ENCODE measurements at regions of chr7 and their contacts with region 1.

Region 1: GRCh38 chr7:3092468-3092867 is 48.8 kb upstream of the CARD11 start:
- DNase-seq: peak; percentile 92
- ATAC-seq: peak; percentile 84
- H3K4me3 Mint-ChIP-seq: peak overlapping the region; percentile 51
- H3K27ac Mint-ChIP-seq: peak overlapping the region; percentile 96
- H3K4me1 Mint-ChIP-seq: peaks cover 64% of the 10 kb centered on the region
- H3K27me3 Mint-ChIP-seq: no peaks in the 10 kb centered on the region
- CTCF ChIP-seq: no peak

Region 2: DNA sequence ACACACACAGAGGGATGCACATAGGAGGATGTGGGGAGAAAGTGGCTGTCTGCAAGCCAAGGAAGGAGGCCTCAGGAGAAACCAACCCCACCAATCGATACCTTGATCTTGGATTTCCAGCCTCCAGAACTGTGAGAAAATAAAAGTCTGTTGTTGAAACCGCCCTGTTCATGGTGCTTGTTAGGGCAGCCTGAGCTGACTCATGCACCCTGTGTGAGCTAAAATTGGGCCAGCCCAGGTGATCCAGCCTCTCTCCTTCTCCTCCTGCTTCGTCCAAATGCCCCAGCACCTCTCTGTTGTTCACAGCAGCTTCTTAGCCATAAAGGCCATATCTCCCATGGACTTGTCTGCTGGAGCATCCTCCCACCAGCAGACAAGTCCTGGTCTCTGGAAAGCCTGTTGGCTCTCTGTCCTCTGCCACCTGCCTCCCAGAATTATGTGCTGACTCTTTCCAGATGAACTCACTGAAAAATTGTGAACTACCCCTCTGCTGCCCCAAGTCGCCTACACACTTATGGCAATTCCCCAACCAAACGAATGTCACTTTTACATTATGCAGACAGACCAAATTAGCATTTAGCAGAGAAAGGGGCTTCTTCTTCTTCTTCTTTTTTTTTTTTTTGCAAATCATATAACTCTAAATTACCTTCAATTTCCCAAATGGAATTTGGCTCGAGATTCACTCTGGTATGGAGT is 18.6 kb before region 1 on chr7:
- CTCF ChIA-PET with region 1: interaction called, 101 read pairs
- POLR2A ChIA-PET with region 1: interaction called, 15 read pairs
- intact Hi-C with region 1: no loop called
- DNase-seq: no peak
- ATAC-seq: peak; percentile 49
- H3K4me3 Mint-ChIP-seq: no peak overlapping the region
- H3K27ac Mint-ChIP-seq: no peak overlapping the region
- H3K4me1 Mint-ChIP-seq: peaks cover 24% of the 10 kb centered on the region
- H3K27me3 Mint-ChIP-seq: no peaks in the 10 kb centered on the region
- CTCF ChIP-seq: no peak

Region 3: DNA sequence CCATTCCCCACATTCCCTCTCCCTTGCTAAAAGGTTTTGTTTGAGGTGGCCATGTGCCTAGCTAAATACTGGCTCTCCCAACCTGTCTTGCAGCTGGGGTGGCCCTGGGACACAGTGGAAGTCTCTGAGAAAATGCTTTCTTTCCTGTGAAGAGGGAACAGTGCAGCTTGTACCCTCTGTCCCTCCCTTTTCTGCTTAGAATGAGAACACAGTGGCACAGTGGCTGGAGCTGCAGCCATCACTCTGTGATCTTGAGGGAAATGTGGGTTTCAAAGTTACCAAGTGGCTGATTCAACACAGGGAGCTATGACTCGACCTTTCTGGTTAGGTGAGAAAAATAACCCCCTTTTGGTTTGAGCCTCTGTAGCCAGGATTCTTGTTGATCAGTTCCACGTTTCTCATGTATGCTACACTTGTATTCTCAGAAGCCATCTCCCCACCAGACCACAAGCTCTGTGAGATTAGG is 13.9 kb after region 1 on chr7:
- CTCF ChIA-PET with region 1: interaction called, 20 read pairs
- POLR2A ChIA-PET with region 1: interaction called, 8 read pairs
- intact Hi-C with region 1: no loop called
- DNase-seq: peak; percentile 78
- ATAC-seq: peak; percentile 84
- H3K4me3 Mint-ChIP-seq: peak overlapping the region; percentile 1
- H3K27ac Mint-ChIP-seq: peak overlapping the region; percentile 94
- H3K4me1 Mint-ChIP-seq: peaks cover 78% of the 10 kb centered on the region
- H3K27me3 Mint-ChIP-seq: no peaks in the 10 kb centered on the region
- CTCF ChIP-seq: no peak

Region 4: GRCh38 chr7:3112479-3113134 is 20.1 kb after region 1 on chr7:
- CTCF ChIA-PET with region 1: interaction called, 8 read pairs
- POLR2A ChIA-PET with region 1: interaction called, 15 read pairs
- intact Hi-C with region 1: no loop called
- DNase-seq: peak; percentile 80
- ATAC-seq: peak; percentile 69
- H3K4me3 Mint-ChIP-seq: peak overlapping the region; percentile 41
- H3K27ac Mint-ChIP-seq: peak overlapping the region; percentile 86
- H3K4me1 Mint-ChIP-seq: peaks cover 77% of the 10 kb centered on the region
- H3K27me3 Mint-ChIP-seq: no peaks in the 10 kb centered on the region
- CTCF ChIP-seq: no peak

Region 5: DNA sequence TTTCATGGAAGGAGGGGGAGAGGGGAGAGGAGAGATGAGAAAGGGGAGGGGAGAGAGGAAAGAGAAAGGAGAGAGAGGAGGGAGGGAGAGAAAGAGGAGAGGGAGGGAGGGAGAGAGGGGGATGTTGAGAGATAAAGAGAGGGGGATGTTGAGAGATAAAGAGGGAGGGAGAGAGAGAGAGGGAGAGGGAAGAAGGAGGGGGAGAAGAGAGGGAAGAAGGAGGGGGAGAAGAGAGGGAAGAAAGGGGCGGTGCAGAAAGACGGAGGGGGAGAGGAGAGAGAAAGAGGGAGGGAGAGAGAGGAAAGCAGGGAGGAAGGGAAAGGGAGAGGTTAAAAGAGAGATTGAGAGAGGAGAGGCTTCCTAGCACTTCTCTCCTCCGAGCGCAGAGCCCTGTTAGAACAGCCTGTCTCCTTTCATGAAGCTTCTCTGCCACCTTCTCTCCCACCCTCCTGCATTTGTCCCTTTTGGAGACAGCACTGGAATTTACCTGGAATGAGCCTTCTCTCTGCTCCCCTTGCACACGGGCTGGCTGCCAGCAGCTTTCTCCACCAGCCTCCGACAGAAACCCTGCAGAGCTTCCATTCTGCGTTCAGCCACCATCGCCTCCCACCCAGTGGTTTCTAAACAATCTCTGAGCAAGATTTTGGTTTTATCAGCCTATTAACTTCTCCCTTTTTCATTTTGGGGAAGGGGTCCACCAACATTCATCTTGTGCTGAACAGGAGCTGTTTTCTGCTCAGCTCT is 25.2 kb after region 1 on chr7:
- CTCF ChIA-PET with region 1: interaction called, 8 read pairs
- POLR2A ChIA-PET with region 1: interaction called, 15 read pairs
- intact Hi-C with region 1: no loop called
- DNase-seq: peak; percentile 79
- ATAC-seq: peak; percentile 63
- H3K4me3 Mint-ChIP-seq: peak overlapping the region; percentile 80
- H3K27ac Mint-ChIP-seq: peak overlapping the region; percentile 93
- H3K4me1 Mint-ChIP-seq: peaks cover 72% of the 10 kb centered on the region
- H3K27me3 Mint-ChIP-seq: no peaks in the 10 kb centered on the region
- CTCF ChIP-seq: no peak

Region 6: GRCh38 chr7:3134715-3135114 is 42.2 kb after region 1 on chr7:
- CTCF ChIA-PET with region 1: interaction called, 15 read pairs
- POLR2A ChIA-PET with region 1: no interaction called
- intact Hi-C with region 1: no loop called
- DNase-seq: peak; percentile 47
- ATAC-seq: peak; percentile 39
- H3K4me3 Mint-ChIP-seq: no peak overlapping the region
- H3K27ac Mint-ChIP-seq: no peak overlapping the region
- H3K4me1 Mint-ChIP-seq: no peaks in the 10 kb centered on the region
- H3K27me3 Mint-ChIP-seq: no peaks in the 10 kb centered on the region
- CTCF ChIP-seq: no peak

Region 7: GRCh38 chr7:3154912-3155494 is 62.5 kb after region 1 on chr7:
- CTCF ChIA-PET with region 1: interaction called, 22 read pairs
- POLR2A ChIA-PET with region 1: no interaction called
- intact Hi-C with region 1: no loop called
- DNase-seq: peak; percentile 84
- ATAC-seq: peak; percentile 94
- H3K4me3 Mint-ChIP-seq: no peak overlapping the region
- H3K27ac Mint-ChIP-seq: no peak overlapping the region
- H3K4me1 Mint-ChIP-seq: peaks cover 22% of the 10 kb centered on the region
- H3K27me3 Mint-ChIP-seq: no peaks in the 10 kb centered on the region
- CTCF ChIP-seq: peak; percentile 83

Measured in activated CD8-positive, alpha-beta T cell treated with anti-CD3 and anti-CD28 coated beads for 36 hours (primary cell).